GM13977 (cell line): ENCODE measurements at regions of chr5 and their contacts with region 1.

Region 1: DNA sequence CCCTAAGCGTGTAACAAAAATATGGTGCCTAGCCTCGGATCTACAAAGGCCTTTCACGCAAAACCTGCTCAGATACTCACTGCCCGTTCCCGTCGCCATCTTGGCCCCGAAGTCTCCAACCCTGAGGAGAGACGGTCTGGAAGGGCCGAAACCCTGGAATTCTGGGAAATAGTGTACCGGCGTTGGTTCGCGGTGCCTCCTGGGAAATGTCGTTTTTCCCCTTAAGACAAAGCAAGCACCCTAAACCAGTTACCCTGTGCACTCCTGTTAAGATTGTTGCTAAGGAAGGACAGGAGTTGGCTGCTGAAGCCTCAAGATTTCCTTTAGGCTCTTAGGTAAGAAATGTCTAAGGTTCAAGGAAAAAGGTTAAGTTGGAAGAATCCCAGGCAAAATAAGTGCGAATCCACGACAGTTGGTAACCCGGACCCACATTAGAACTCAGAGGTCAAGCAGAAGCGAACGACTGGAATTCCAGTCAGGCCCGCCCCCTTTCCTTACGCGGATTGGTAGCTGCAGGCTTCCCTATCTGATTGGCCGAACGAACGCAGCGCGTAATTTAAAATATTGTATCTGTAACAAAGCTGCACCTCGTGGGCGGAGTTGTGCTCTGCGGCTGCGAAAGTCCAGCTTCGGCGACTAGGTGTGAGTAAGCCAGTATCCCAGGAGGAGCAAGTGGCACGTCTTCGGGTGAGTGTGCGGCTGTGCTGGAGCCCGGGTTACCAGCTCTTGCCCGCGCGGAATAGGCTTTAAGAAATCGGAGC is at the starts of genes BRD8 and KIF20A:
- DNase-seq: peak; percentile 88
- CTCF ChIP-seq: no peak

Region 2: GRCh38 chr5:138408023-138408422 is 229.3 kb after region 1 on chr5:
- in situ Hi-C with region 1: loop called (anchors 25 kb)
- DNase-seq: peak; percentile 59
- CTCF ChIP-seq: no peak